Pancreas (tissue), 10 donors: ENCODE measurements at regions of chr6 and their contacts with region 1.

Region 1: DNA sequence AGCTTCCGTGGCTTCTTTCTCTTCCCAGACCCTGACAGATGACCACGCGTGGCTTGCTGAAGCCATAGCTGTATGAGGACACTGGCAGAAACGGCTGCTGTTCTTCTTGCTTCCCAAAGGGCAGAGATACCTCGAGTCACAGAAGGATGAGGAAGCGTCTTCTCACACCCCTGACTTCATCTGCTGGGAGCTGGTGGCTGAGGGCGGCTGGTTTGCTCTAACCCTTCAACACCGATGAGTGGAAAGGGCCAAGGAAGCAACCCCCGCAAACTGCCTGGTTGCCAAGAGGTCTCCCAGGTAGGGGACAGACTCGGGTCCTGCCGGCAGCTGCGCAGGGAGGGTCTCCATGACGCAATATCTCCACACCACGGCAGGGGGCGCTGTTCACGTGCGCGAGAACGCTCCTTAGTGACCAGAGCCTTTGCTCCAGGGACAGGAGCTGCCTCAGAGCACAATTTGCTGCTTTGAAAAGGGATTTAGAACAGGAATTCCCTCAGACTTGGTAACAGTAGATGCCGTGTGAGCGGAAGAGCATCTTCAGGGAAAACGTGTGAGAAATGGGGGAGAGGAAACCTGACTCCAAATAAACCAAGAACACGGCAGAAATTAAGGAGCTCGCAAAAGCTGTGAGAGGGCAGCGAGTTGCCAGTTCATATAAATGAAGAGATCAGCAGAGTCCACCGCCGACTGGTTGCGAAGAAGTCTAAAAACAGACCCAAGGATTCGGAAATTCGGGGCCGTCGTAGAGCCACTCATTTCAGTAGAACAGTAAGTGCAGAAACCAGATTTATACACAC is 80.2 kb downstream of the ERMARD start:
- DNase-seq: peak; percentile 67 to 97 (median 85)
- ATAC-seq: peak; percentile 87 to 97 (median 94)
- H3K4me3 ChIP-seq: peak overlapping the region in 2 of 4 donors; percentile 15 to 31
- H3K27ac ChIP-seq: peak overlapping the region; percentile 31 to 66 (median 54)
- H3K4me1 ChIP-seq: peaks cover 6 to 16% (median 9%) of the 10 kb centered on the region in 3 donors
- H3K27me3 ChIP-seq: no peaks in the 10 kb centered on the region
- CTCF ChIP-seq: peak; percentile 92 to 96 (median 94)

Region 2: GRCh38 chr6:169905041-169905807 is 73.6 kb after region 1 on chr6:
- intact Hi-C with region 1: no loop called
- DNase-seq: peak in 5 of 6 donors; percentile 70 to 84 (median 78)
- ATAC-seq: peak; percentile 93 to 96 (median 96)
- H3K4me3 ChIP-seq: no peak overlapping the region
- H3K27ac ChIP-seq: peak overlapping the region in 2 of 4 donors; percentile 27 to 62
- H3K4me1 ChIP-seq: peaks cover 6 to 15% (median 13%) of the 10 kb centered on the region in 3 donors
- H3K27me3 ChIP-seq: no peaks in the 10 kb centered on the region
- CTCF ChIP-seq: no peak

Region 3: GRCh38 chr6:169959136-169960002 is 127.7 kb after region 1 on chr6:
- intact Hi-C with region 1: no loop called
- DNase-seq: peak in 5 of 6 donors; percentile 36 to 79 (median 53)
- ATAC-seq: peak; percentile 74 to 88 (median 80)
- H3K4me3 ChIP-seq: no peak overlapping the region
- H3K27ac ChIP-seq: peak overlapping the region in 2 of 4 donors; percentile 46 to 58
- H3K4me1 ChIP-seq: no peaks in the 10 kb centered on the region
- H3K27me3 ChIP-seq: no peaks in the 10 kb centered on the region
- CTCF ChIP-seq: peak in 1 of 4 donors; percentile 7

Region 4: GRCh38 chr6:170295510-170296422 is 464.1 kb after region 1 on chr6:
- intact Hi-C with region 1: loop called in 1 of 3 experiments (anchors 10 kb)
- DNase-seq: peak in 4 of 6 donors; percentile 45 to 83 (median 50)
- ATAC-seq: peak; percentile 35 to 59 (median 40)
- H3K4me3 ChIP-seq: peak overlapping the region; percentile 14 to 75 (median 34)
- H3K27ac ChIP-seq: no peak overlapping the region
- H3K4me1 ChIP-seq: peaks cover 27 to 32% (median 28%) of the 10 kb centered on the region in 3 donors
- H3K27me3 ChIP-seq: no peaks in the 10 kb centered on the region
- CTCF ChIP-seq: no peak

Region 5: GRCh38 chr6:170516783-170517616 is 685.4 kb after region 1 on chr6:
- intact Hi-C with region 1: loop called in 1 of 3 experiments (anchors 5 kb)
- DNase-seq: peak in 4 of 6 donors; percentile 30 to 56 (median 34)
- ATAC-seq: peak; percentile 72 to 99 (median 98)
- H3K4me3 ChIP-seq: no peak overlapping the region
- H3K27ac ChIP-seq: no peak overlapping the region
- H3K4me1 ChIP-seq: no peaks in the 10 kb centered on the region
- H3K27me3 ChIP-seq: no peaks in the 10 kb centered on the region
- CTCF ChIP-seq: peak; percentile 40 to 70 (median 66)